ENCODE measurements at regions of chr2 and their contacts with region 1.

Region 1: DNA sequence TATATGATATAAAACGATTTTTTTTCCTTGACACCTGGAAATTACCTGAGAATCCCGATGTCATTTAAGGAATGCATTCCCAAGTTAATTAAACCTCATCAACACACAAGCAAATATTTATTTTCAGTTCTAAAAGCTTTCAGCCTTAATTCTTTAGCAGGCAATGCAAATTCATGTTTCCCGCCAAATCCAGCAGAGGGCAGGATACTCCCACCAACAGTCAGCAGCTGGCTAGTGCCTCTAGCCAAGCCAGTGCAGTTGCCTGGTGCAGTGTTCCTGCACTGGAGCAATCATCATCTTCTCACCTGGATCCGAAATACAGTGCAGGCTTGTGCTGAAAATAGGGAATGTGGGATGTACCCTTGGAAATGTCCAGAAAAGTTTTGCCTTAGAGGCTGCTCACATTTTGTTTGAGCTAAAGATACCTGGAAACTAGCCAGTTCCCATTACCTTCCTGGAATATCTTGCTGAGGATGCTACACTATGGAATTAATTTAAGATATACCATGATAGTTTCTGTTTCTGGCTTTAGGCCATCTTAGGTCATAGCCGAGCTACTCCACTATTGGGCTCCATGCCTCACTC is 48.4 kb upstream of the CYTIP start:
- DNase-seq: peak; percentile 23 to 71
- H3K4me3 ChIP-seq: no peak overlapping the region
- H3K27ac ChIP-seq: no peak overlapping the region
- H3K4me1 ChIP-seq: no peaks in the 10 kb centered on the region
- H3K27me3 ChIP-seq: no peaks in the 10 kb centered on the region
- CTCF ChIP-seq: peak; percentile 71 to 90 (median 86)
- EP300 ChIP-seq: no peak
- POLR2A ChIP-seq: no peak
- RAD21 ChIP-seq: peak; percentile 96 to 98

Region 2: DNA sequence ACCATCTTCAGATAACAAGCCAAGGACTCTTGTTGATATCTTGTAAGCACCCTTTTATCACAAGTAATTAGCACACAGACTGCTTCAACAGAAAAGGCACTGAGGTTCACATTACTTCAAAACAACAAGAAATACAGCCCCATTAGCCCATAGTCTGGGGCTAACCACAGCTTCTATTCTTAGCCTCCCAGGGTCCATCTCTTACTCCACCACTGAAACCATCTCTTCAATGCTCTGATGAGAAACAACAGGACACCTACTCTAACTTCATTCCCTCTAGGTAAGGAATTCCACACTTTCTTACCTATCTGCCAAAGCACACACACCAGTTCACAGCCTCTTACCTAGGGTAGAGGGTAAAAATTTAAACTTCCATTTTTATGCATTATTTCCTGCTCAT is 22.0 kb before region 1 on chr2:
- CTCF ChIA-PET with region 1: no interaction called
- POLR2A ChIA-PET with region 1: no interaction called
- DNase-seq: no peak
- H3K4me3 ChIP-seq: no peak overlapping the region
- H3K27ac ChIP-seq: no peak overlapping the region
- H3K4me1 ChIP-seq: no peaks in the 10 kb centered on the region
- H3K27me3 ChIP-seq: no peaks in the 10 kb centered on the region
- CTCF ChIP-seq: no peak
- EP300 ChIP-seq: no peak
- POLR2A ChIP-seq: no peak
- RAD21 ChIP-seq: no peak

Region 3: GRCh38 chr2:157480182-157480961 is 11.9 kb before region 1 on chr2:
- CTCF ChIA-PET with region 1: interaction called, 11 read pairs
- POLR2A ChIA-PET with region 1: no interaction called
- DNase-seq: no peak
- H3K4me3 ChIP-seq: no peak overlapping the region
- H3K27ac ChIP-seq: no peak overlapping the region
- H3K4me1 ChIP-seq: no peaks in the 10 kb centered on the region; a peak in 1 of 7 replicates
- H3K27me3 ChIP-seq: no peaks in the 10 kb centered on the region
- CTCF ChIP-seq: no peak
- EP300 ChIP-seq: no peak
- POLR2A ChIP-seq: no peak
- RAD21 ChIP-seq: no peak

Region 4: GRCh38 chr2:157523270-157524247 is 31.3 kb after region 1 on chr2:
- CTCF ChIA-PET with region 1: no interaction called
- POLR2A ChIA-PET with region 1: no interaction called
- DNase-seq: no peak
- H3K4me3 ChIP-seq: no peak overlapping the region
- H3K27ac ChIP-seq: no peak overlapping the region
- H3K4me1 ChIP-seq: no peaks in the 10 kb centered on the region
- H3K27me3 ChIP-seq: no peaks in the 10 kb centered on the region
- CTCF ChIP-seq: no peak
- EP300 ChIP-seq: no peak
- POLR2A ChIP-seq: no peak
- RAD21 ChIP-seq: no peak

Region 5: DNA sequence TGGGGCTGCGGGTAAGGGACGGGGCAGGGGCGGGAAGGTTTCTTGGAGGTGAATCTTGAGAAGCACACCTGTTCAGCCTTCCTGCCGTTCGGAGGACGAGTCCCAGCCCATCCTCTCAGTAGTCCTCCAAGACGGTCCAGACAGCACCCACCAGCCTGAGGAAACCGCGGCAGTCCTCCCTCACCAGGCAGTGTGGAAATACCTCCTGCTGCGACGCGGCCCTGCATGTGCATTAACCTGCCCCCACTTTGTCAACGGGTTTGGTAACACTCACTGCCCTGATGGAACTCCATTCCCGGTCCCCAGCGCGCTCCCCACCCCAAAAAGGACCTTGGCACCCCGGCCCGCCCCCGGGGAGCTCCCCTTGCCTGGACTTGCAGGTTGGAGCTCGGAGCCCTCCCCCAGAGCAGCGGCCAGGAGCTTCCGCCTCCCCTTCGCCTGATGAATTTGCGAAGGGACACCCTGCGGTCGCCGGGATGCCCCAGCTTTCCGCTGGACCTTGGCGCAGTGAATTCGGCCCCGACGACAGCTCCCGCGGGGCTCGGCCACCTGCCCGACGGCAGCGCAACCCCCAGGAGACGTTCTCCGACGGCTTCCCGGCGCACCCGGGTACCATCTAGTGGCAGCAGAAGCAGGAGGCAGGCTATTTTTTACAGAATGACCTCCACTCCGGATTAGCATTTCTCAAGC is 104.9 kb after region 1 on chr2:
- CTCF ChIA-PET with region 1: interaction called, 24 read pairs
- POLR2A ChIA-PET with region 1: no interaction called
- DNase-seq: peak; percentile 21 to 83
- H3K4me3 ChIP-seq: peak overlapping the region; percentile 4 to 50 (median 24); a peak in 6 of 8 replicates
- H3K27ac ChIP-seq: no peak overlapping the region
- H3K4me1 ChIP-seq: no peaks in the 10 kb centered on the region
- H3K27me3 ChIP-seq: peaks cover 0 to 5% (median 3%) of the 10 kb centered on the region in 4 experiments; a peak in 2 of 7 replicates
- CTCF ChIP-seq: peak; percentile 73 to 82 (median 74)
- EP300 ChIP-seq: no peak
- POLR2A ChIP-seq: no peak
- RAD21 ChIP-seq: peak; percentile 71 to 80

Measured in H1 (cell line).